Activated CD8-positive, alpha-beta T cell treated with anti-CD3 and anti-CD28 coated beads, Interleukin-2, amount 10 ng/mL, durations not matched to agents 7 days and 5 days (primary cell): ENCODE measurements at regions of chr1 and their contacts with region 1.

Region 1: DNA sequence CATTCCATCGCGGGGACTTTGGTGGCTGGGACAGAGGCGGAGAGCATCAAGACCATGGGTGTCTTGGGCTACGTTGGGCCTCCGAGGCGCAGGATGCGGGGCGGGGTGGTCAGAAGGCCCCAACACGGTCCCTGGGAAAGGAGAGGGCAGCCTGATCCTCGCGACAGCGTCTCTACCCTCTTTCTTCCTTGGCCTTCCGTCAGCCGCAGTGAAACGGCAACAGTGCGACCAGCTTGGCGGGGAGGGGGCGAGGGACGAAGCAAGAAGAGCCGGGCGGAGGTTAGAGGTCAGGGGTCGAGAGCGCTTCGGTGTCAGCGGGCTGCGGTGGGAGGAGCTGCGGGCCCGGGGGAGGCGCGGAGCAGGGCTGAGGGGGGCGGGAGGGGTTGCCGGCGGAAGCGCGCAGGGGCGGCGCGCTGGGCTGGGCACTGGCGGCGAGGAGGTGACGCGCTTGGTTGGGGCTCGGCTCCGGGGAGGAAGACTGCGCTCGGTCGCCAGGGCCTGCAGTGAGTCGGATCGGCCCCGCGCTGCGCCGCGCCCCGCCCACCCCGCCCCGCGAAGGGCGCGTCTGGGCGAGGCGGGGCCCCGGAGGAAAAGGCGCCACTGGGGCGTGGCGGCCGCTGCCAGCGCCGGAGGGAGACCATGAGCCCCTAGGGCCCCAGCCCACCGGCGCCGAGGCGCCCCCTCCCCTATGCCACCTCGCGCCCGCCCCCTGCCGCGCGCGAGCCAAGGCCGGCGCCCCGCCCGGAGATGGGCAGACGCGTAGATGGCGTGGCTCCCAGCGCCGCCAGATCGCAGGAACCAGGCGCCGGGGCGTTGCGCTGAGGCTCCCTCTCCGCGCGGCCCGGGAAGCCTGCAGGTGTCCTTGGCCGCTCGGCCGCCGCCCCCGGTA is at the start of gene KCNC4:
- DNase-seq: peak; percentile 96
- ATAC-seq: peak; percentile 92
- H3K4me3 Mint-ChIP-seq: peak within 1 kb of the TSS; percentile 81
- H3K27ac Mint-ChIP-seq: peak within 1 kb of the TSS; percentile 95
- H3K4me1 Mint-ChIP-seq: peaks cover 42% of the 10 kb centered on the region
- H3K27me3 Mint-ChIP-seq: peaks cover 8% of the 10 kb centered on the region
- total RNA-seq, gene KCNC4: 7.5 to 8.3 TPM

Region 2: GRCh38 chr1:110243574-110243973 is 33.6 kb after region 1 on chr1:
- CTCF ChIA-PET with region 1: interaction called, 18 read pairs
- POLR2A ChIA-PET with region 1: interaction called, 3 read pairs
- DNase-seq: no peak
- ATAC-seq: no peak
- H3K4me3 Mint-ChIP-seq: no peak overlapping the region
- H3K27ac Mint-ChIP-seq: no peak overlapping the region
- H3K4me1 Mint-ChIP-seq: no peaks in the 10 kb centered on the region
- H3K27me3 Mint-ChIP-seq: no peaks in the 10 kb centered on the region

Region 3: DNA sequence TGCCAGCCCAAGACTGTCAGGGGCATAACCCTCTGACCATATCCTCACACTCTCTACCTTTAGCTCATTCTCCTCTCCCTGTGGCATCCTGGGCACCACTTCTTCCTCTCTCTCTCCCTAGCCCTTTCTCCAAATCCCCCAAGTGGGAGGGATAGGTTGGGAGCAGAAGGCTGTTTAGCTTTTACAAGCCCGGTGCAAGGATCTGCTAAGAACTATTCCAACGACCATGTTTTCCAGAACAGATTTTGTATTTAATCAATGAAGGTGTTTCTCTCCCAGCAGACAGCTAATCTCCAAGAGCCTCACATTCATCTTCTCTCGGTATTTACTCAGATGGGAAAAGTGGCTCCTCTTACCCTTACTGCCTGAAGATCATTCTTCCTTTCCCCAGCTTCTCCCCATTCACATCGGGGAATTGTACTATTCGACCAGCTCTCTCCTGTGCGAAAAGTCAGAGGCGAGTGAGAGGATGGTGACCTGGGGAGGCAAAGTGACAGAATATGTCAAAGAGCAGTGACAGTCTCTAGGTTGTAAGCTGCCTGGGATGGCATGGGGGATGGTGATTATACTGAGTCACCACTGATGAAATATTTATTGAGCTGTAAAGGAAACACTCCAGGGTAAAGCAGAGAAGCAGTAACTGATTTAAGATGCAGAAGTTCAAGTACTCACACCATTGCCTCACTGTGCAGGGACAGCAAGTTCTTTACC is 82.2 kb after region 1 on chr1:
- CTCF ChIA-PET with region 1: interaction called, 10 read pairs
- POLR2A ChIA-PET with region 1: no interaction called
- DNase-seq: no peak
- ATAC-seq: no peak
- H3K4me3 Mint-ChIP-seq: no peak overlapping the region
- H3K27ac Mint-ChIP-seq: no peak overlapping the region
- H3K4me1 Mint-ChIP-seq: no peaks in the 10 kb centered on the region
- H3K27me3 Mint-ChIP-seq: no peaks in the 10 kb centered on the region

Region 4: GRCh38 chr1:110338886-110339406 is 129.0 kb after region 1 on chr1 and contains the start of gene RBM15:
- CTCF ChIA-PET with region 1: interaction called, 87 read pairs
- POLR2A ChIA-PET with region 1: interaction called, 69 read pairs
- DNase-seq: peak; percentile 99
- ATAC-seq: peak; percentile 82
- H3K4me3 Mint-ChIP-seq: no peak within 1 kb of the TSS
- H3K27ac Mint-ChIP-seq: no peak within 1 kb of the TSS
- H3K4me1 Mint-ChIP-seq: peaks cover 52% of the 10 kb centered on the region
- H3K27me3 Mint-ChIP-seq: no peaks in the 10 kb centered on the region
- total RNA-seq, gene RBM15: 72.0 to 75.5 TPM

Region 5: DNA sequence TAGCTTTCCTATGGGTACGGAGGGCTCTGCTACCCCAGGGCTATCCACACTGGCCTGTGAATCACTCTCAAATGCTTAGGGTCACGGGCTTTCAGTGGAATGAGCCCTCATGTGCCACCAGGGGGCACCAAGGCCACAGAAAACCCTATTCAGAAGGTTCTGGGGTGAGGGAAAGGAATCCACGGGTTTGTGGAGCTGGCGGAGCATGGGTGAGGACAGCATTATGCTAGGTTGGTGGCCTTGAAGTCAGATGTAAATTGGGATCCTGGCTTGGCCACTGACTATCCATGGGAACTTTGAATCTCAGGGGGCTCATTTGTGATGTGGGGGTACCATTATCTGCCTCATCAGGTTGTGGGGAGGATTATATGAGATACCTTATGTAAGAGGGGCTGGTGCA is 202.6 kb after region 1 on chr1:
- CTCF ChIA-PET with region 1: interaction called, 25 read pairs
- POLR2A ChIA-PET with region 1: interaction called, 3 read pairs
- DNase-seq: peak; percentile 70
- ATAC-seq: peak; percentile 55
- H3K4me3 Mint-ChIP-seq: no peak overlapping the region
- H3K27ac Mint-ChIP-seq: no peak overlapping the region
- H3K4me1 Mint-ChIP-seq: peaks cover 16% of the 10 kb centered on the region
- H3K27me3 Mint-ChIP-seq: no peaks in the 10 kb centered on the region